RWPE1 (cell line): ENCODE measurements at regions of chr2 and their contacts with region 1.

Region 1: GRCh38 chr2:32012872-32013271 is 2.1 kb upstream of the MEMO1 start:
- DNase-seq: no peak
- H3K27ac ChIP-seq: no peak overlapping the region
- CTCF ChIP-seq: no peak

Region 2: DNA sequence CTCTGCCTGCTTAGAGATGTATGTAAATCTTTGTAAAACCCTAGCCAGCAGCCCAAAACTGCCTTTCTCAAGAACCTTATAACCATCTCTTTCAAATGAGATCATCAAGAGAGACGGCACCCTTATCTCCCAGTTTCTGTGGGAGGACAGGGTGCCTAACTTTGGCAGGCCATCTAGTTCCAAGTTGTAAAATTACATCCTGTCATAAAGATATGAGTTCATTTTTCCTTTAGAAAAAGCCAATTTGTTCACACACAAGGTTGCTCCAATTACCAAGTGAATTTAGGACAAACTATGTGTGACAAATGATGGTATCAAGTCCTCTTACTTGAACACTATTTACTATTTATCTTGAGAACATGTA is 67.3 kb before region 1 on chr2:
- CTCF ChIA-PET with region 1: no interaction called
- POLR2A ChIA-PET with region 1: no interaction called
- DNase-seq: no peak
- H3K27ac ChIP-seq: no peak overlapping the region
- CTCF ChIP-seq: no peak

Region 3: DNA sequence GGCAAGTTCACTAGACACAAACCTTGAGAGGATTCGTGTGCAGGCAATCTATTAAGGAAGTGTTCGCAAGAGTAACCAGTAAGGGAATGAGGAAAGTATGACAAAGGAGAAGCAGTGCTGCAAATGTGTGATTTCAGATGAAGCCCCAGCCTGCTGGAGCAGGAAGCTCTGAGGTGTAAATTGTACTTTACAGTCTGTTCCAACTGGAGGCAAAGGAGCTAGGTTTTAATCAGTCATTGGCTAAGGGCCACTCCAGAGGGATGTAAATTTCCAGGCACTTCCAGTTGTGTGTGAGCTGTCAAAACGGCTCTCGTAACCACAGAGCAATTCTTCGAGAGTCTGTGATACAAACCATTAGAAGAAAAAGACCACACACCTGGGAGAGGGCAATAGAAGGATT is 1945.7 kb after region 1 on chr2:
- CTCF ChIA-PET with region 1: interaction called, 11 read pairs
- POLR2A ChIA-PET with region 1: no interaction called
- DNase-seq: no peak
- H3K27ac ChIP-seq: no peak overlapping the region
- CTCF ChIP-seq: no peak